IMR-90 (cell line): ENCODE measurements at regions of chr10 and their contacts with region 1.

Region 1: DNA sequence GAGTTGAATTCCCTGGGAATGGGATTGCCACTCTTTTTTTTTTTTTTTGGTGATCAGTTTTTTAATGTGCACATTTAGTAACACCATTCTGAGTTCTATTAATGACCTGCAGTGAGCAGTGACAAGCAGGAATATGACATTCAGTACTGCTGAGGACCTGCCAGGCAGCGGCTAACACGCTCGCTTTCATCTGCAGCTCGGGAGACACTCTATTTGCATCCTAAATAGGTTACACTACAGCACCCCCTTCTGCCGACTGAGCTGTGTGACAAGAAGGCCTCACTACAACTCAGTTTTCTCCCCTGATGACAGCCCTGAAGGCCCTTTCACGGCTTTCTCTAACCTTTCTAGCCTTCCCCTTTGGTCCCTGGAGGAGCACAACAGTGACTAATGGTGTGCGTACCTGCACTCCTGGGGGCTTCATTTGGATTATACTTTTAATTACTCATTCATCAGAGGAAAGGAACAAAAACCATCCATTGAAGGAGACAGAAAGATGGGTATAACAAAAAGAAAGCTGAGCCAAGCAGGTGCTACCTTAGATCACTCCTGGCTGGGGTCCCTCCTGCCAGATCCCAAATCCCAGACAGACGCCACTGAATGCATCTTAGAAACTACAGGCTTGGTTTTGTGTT is 872.4 kb downstream of the LRMDA start:
- DNase-seq: peak; percentile 71
- ATAC-seq: peak; percentile 86
- H3K4me3 ChIP-seq: no peak overlapping the region
- H3K27ac ChIP-seq: no peak overlapping the region
- H3K4me1 ChIP-seq: peaks cover 9% of the 10 kb centered on the region
- H3K27me3 ChIP-seq: 0 out of 2 replicates have a peak, but pooled peaks cover 2% of the 10 kb centered on the region
- CTCF ChIP-seq: peak; percentile 55
- POLR2A ChIP-seq: no peak
- RAD21 ChIP-seq: peak; percentile 67

Region 2: GRCh38 chr10:75910032-75910431 is 393.8 kb before region 1 on chr10:
- CTCF ChIA-PET with region 1: no interaction called
- POLR2A ChIA-PET with region 1: no interaction called
- dilution Hi-C with region 1: no loop called
- in situ Hi-C with region 1: no loop called
- intact Hi-C with region 1: loop called (anchors 10 kb)
- DNase-seq: peak; percentile 24
- ATAC-seq: peak; percentile 51; the same call in 1 of the 2 replicates
- H3K4me3 ChIP-seq: no peak overlapping the region
- H3K27ac ChIP-seq: no peak overlapping the region
- H3K4me1 ChIP-seq: no peaks in the 10 kb centered on the region
- H3K27me3 ChIP-seq: peaks cover 7% of the 10 kb centered on the region
- CTCF ChIP-seq: peak; percentile 41
- POLR2A ChIP-seq: no peak
- RAD21 ChIP-seq: no peak

Region 3: GRCh38 chr10:76287856-76288255 is 15.9 kb before region 1 on chr10:
- CTCF ChIA-PET with region 1: no interaction called
- POLR2A ChIA-PET with region 1: no interaction called
- dilution Hi-C with region 1: no loop called
- in situ Hi-C with region 1: no loop called
- intact Hi-C with region 1: no loop called
- DNase-seq: peak; percentile 6
- ATAC-seq: no peak
- H3K4me3 ChIP-seq: no peak overlapping the region
- H3K27ac ChIP-seq: no peak overlapping the region
- H3K4me1 ChIP-seq: peaks cover 7% of the 10 kb centered on the region; the same call in 1 of the 2 replicates
- H3K27me3 ChIP-seq: no peaks in the 10 kb centered on the region
- CTCF ChIP-seq: no peak
- POLR2A ChIP-seq: no peak
- RAD21 ChIP-seq: no peak